HEK293T (cell line): ENCODE measurements at regions of chr15 and their contacts with region 1.

Region 1: DNA sequence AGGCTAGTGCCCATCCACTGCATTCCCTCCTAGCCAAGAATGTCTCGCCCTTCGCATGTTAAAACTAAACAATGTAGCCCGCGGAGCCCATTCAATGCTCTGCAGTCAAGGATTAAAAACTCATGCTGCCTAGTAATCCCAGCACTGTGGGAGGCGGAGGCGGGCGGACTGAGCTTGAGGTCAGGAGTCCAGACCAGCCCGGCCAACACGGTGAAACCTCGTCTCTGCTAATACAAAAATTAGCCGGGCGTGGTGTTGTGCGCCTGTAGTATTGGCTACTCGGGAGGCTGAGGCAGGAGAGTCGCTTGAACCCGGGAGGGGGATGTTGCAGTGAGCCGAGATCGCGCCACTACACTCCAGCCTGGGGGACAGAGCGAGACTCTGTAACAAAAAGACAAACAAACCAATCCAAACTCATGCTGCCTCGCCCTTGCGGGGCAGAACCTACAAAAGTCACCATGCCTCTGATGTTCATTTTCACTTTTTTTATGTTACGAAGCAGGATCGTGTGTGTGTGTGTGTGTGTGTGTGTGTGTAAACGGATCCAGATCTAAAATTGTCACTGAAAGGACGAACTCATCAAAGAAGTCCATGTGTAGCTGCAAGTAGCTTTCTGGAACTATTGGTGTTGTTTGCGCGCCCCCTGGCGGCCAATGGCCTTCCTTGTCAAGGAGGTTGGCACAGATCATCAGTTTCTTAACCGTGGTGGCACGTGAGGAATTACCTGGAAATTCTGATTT is 54.8 kb upstream of the SPESP1 start:
- DNase-seq: peak; percentile 81

Region 2: GRCh38 chr15:68672781-68673205 is 202.8 kb before region 1 on chr15:
- CTCF ChIA-PET with region 1: interaction called, 12 read pairs
- POLR2A ChIA-PET with region 1: no interaction called
- DNase-seq: no peak

Region 3: GRCh38 chr15:68783226-68784058 is 92.1 kb before region 1 on chr15:
- CTCF ChIA-PET with region 1: interaction called, 18 read pairs
- POLR2A ChIA-PET with region 1: interaction called, 4 read pairs
- DNase-seq: peak; percentile 54

Region 4: DNA sequence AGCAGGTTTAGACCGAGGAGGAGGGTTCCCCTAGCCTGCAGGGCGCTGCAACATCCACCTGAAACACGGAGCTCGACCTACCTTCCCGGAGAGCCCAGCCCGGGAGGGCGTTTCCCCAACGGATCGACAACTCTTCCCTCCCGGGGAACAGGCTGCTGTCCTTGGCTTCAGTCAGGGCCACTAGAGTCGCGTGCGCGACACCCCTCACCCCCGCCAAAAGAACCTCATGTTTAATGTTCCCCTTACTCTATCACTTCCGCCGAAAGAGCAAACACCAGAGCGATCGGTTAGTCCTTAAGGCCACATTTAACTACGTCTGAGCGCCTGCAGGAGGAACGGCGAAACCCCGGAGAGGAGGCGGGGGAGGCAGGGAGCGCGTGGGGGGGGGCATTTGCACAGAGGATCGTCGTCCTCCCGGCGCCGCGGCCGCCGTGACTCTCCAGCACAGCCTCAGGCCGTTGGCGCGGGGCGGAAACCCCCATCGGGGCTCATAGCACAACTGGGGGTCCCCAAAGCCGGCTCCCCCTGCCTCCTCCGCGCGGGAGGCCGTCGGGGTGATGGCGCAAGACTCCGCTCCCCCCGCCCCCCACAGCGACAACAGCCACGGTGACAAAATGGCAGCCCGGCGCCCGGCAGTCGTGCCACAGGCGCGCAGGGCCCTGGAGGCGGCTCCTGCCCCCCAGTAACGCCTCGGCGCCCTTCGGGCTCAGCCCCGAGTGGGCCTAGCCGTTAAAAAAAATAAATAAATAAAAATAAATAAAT is 58.1 kb before region 1 on chr15:
- CTCF ChIA-PET with region 1: interaction called, 5 read pairs
- POLR2A ChIA-PET with region 1: interaction called, 10 read pairs
- DNase-seq: peak; percentile 43

Region 5: GRCh38 chr15:68888419-68888818 is 12.9 kb after region 1 on chr15:
- CTCF ChIA-PET with region 1: no interaction called
- POLR2A ChIA-PET with region 1: no interaction called
- DNase-seq: no peak

Region 6: DNA sequence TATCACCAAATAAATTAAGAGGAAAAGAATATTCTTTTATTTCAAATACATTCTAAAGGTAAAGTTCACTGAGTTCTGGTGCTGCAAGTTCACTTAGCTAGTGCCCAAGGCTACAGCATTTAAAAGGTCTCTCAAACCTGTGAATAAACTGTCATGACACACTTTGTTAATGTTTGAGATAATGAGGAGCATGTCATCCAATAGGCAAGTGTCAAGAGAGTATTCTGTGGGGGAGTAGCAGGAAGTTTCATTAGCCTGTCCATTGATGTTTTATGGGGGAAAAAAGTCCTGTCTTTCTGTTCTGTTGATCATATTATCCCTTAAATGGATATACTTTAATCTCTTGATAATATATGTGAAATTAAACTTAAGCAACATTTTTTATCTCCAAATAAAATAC is 58.8 kb after region 1 on chr15:
- CTCF ChIA-PET with region 1: no interaction called
- POLR2A ChIA-PET with region 1: no interaction called
- DNase-seq: no peak

Region 7: GRCh38 chr15:68980786-68981185 is 105.2 kb after region 1 on chr15:
- CTCF ChIA-PET with region 1: no interaction called
- POLR2A ChIA-PET with region 1: no interaction called
- DNase-seq: no peak